A673 (cell line): ENCODE measurements at regions of chr2 and their contacts with region 1.

Region 1: GRCh38 chr2:122203523-122203922 is 448.1 kb downstream of the TSN start:
- DNase-seq: peak; percentile 98
- H3K4me3 ChIP-seq: no peak overlapping the region
- H3K27ac ChIP-seq: peak overlapping the region; percentile 74
- H3K4me1 ChIP-seq: peaks cover 38% of the 10 kb centered on the region
- H3K27me3 ChIP-seq: no peaks in the 10 kb centered on the region
- CTCF ChIP-seq: peak; percentile 59

Region 2: GRCh38 chr2:121897335-121897970 is 306.1 kb before region 1 on chr2:
- CTCF ChIA-PET with region 1: interaction called, 6 read pairs
- POLR2A ChIA-PET with region 1: no interaction called
- intact Hi-C with region 1: loop called (anchors 10 kb)
- DNase-seq: peak; percentile 90
- H3K4me3 ChIP-seq: no peak overlapping the region
- H3K27ac ChIP-seq: no peak overlapping the region
- H3K4me1 ChIP-seq: peaks cover 6% of the 10 kb centered on the region
- H3K27me3 ChIP-seq: no peaks in the 10 kb centered on the region
- CTCF ChIP-seq: peak; percentile 88

Region 3: DNA sequence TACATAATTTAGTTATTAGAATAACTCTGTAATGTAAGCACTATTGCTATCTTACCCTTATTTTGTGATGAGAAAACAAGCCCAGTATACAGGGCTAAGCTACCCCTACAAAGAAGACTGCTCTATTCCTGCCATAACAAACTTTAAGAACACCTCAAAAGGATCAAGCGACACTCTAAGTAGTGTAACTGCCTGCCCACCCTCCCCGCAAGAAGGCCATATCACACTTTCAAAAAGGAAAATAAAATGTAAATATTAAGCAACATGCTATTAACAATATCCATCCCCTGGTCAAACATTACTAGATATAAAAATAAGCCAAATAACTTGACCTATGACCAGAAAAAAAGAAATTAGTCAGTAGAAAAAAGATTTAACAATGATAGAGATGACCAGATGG is 1079.9 kb after region 1 on chr2:
- CTCF ChIA-PET with region 1: no interaction called
- POLR2A ChIA-PET with region 1: no interaction called
- intact Hi-C with region 1: no loop called
- DNase-seq: no peak
- H3K4me3 ChIP-seq: no peak overlapping the region
- H3K27ac ChIP-seq: no peak overlapping the region
- H3K4me1 ChIP-seq: no peaks in the 10 kb centered on the region
- H3K27me3 ChIP-seq: no peaks in the 10 kb centered on the region
- CTCF ChIP-seq: no peak